ENCODE measurements at regions of chr5 and their contacts with region 1.

Region 1: GRCh38 chr5:142128675-142129208 is 20.2 kb downstream of the NDFIP1 start:
- DNase-seq: peak in 2 of 9 experiments; percentile 17 to 44
- ATAC-seq: peak; percentile 41
- H3K4me3 ChIP-seq: peak overlapping the region in 1 of 2 experiments; percentile 20
- H3K4me3 Mint-ChIP-seq: peak overlapping the region; percentile 8
- H3K27ac ChIP-seq: no peak overlapping the region
- H3K27ac Mint-ChIP-seq: peak overlapping the region; percentile 58
- H3K4me1 ChIP-seq: peaks cover 64% of the 10 kb centered on the region
- H3K4me1 Mint-ChIP-seq: peaks cover 75% of the 10 kb centered on the region
- H3K27me3 ChIP-seq: no peaks in the 10 kb centered on the region
- H3K27me3 Mint-ChIP-seq: no peaks in the 10 kb centered on the region
- CTCF ChIP-seq: no peak

Region 2: GRCh38 chr5:142082182-142082781 is 46.5 kb before region 1 on chr5:
- CTCF ChIA-PET with region 1: no interaction called
- POLR2A ChIA-PET with region 1: no interaction called
- intact Hi-C with region 1: loop called in 1 of 2 experiments (anchors 5 kb)
- DNase-seq: no peak
- ATAC-seq: no peak
- H3K4me3 ChIP-seq: no peak overlapping the region
- H3K4me3 Mint-ChIP-seq: no peak overlapping the region
- H3K27ac ChIP-seq: no peak overlapping the region
- H3K27ac Mint-ChIP-seq: no peak overlapping the region
- H3K4me1 ChIP-seq: no peaks in the 10 kb centered on the region
- H3K4me1 Mint-ChIP-seq: peaks cover 8% of the 10 kb centered on the region
- H3K27me3 ChIP-seq: no peaks in the 10 kb centered on the region
- H3K27me3 Mint-ChIP-seq: no peaks in the 10 kb centered on the region
- CTCF ChIP-seq: no peak

Region 3: DNA sequence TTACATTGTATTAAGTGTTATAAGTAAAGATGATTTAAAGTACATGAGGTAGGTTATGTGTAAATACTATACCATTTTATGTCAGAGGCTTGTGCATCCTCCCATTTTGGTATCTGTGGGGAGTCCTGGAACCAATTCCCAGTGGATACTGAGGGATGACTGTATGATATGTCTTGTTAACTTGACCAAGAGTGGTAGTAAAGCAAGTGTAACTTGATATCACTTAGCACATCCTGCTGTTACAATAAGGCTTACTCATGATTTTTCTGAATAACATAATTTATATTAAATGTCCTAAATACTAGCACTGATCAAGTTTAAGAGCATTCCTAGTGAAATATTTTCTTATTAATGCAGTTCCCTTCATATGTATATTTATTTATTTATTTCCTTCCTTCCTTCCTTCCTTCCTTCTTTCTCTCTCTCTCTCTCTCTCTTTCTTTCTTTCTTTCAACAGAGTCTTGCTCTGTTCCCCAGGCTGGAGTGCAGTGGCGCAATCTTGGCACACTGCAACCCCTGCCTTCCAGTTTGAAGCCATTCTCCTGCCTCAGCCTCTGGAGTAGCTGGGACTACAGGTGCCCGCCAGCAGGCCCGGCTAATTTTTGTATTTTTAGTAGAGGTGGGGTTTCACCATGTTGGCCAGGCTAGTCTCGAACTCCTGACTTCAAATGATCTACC is 12.7 kb before region 1 on chr5:
- CTCF ChIA-PET with region 1: interaction called, 6 read pairs
- POLR2A ChIA-PET with region 1: interaction called, 3 read pairs
- intact Hi-C with region 1: loop called (anchors 2 kb)
- DNase-seq: no peak
- ATAC-seq: no peak
- H3K4me3 ChIP-seq: no peak overlapping the region
- H3K4me3 Mint-ChIP-seq: no peak overlapping the region
- H3K27ac ChIP-seq: no peak overlapping the region
- H3K27ac Mint-ChIP-seq: no peak overlapping the region
- H3K4me1 ChIP-seq: peaks cover 73% of the 10 kb centered on the region
- H3K4me1 Mint-ChIP-seq: peaks cover 74% of the 10 kb centered on the region
- H3K27me3 ChIP-seq: no peaks in the 10 kb centered on the region
- H3K27me3 Mint-ChIP-seq: no peaks in the 10 kb centered on the region
- CTCF ChIP-seq: no peak

Region 4: GRCh38 chr5:142159354-142159753 is 30.6 kb after region 1 on chr5:
- CTCF ChIA-PET with region 1: no interaction called
- POLR2A ChIA-PET with region 1: no interaction called
- intact Hi-C with region 1: no loop called
- DNase-seq: no peak
- ATAC-seq: no peak
- H3K4me3 ChIP-seq: no peak overlapping the region
- H3K4me3 Mint-ChIP-seq: no peak overlapping the region
- H3K27ac ChIP-seq: no peak overlapping the region
- H3K27ac Mint-ChIP-seq: peak overlapping the region; percentile 14
- H3K4me1 ChIP-seq: no peaks in the 10 kb centered on the region
- H3K4me1 Mint-ChIP-seq: peaks cover 12% of the 10 kb centered on the region
- H3K27me3 ChIP-seq: no peaks in the 10 kb centered on the region
- H3K27me3 Mint-ChIP-seq: no peaks in the 10 kb centered on the region
- CTCF ChIP-seq: no peak

Region 5: GRCh38 chr5:142170254-142170953 is 41.7 kb after region 1 on chr5:
- CTCF ChIA-PET with region 1: no interaction called
- POLR2A ChIA-PET with region 1: no interaction called
- intact Hi-C with region 1: no loop called
- DNase-seq: no peak
- ATAC-seq: no peak
- H3K4me3 ChIP-seq: no peak overlapping the region
- H3K4me3 Mint-ChIP-seq: no peak overlapping the region
- H3K27ac ChIP-seq: no peak overlapping the region
- H3K27ac Mint-ChIP-seq: no peak overlapping the region
- H3K4me1 ChIP-seq: no peaks in the 10 kb centered on the region
- H3K4me1 Mint-ChIP-seq: no peaks in the 10 kb centered on the region
- H3K27me3 ChIP-seq: no peaks in the 10 kb centered on the region
- H3K27me3 Mint-ChIP-seq: peaks cover under 1% of the 10 kb centered on the region
- CTCF ChIP-seq: no peak

Measured in CD8-positive, alpha-beta T cell (primary cell).